Activated naive CD8-positive, alpha-beta T cell treated with anti-CD3 and anti-CD28 coated beads, Interleukin-2, amount 10 ng/mL, durations not matched to agents 7 days and 5 days (primary cell): ENCODE measurements at regions of chr11 and their contacts with region 1.

Region 1: GRCh38 chr11:62726915-62727763 is at the start of gene HNRNPUL2:
- DNase-seq: peak; percentile 99
- ATAC-seq: peak; percentile 89
- H3K4me3 Mint-ChIP-seq: peak within 1 kb of the TSS; percentile 100
- H3K27ac Mint-ChIP-seq: peak within 1 kb of the TSS; percentile 98
- H3K4me1 Mint-ChIP-seq: peaks cover 41% of the 10 kb centered on the region
- H3K27me3 Mint-ChIP-seq: no peaks in the 10 kb centered on the region
- total RNA-seq, gene HNRNPUL2: 67.9 to 72.5 TPM

Region 2: GRCh38 chr11:62479631-62480201 is 247.4 kb before region 1 on chr11:
- POLR2A ChIA-PET with region 1: no interaction called
- DNase-seq: no peak
- ATAC-seq: no peak
- H3K4me3 Mint-ChIP-seq: no peak overlapping the region
- H3K27ac Mint-ChIP-seq: no peak overlapping the region
- H3K4me1 Mint-ChIP-seq: no peaks in the 10 kb centered on the region
- H3K27me3 Mint-ChIP-seq: peaks cover 6% of the 10 kb centered on the region

Region 3: DNA sequence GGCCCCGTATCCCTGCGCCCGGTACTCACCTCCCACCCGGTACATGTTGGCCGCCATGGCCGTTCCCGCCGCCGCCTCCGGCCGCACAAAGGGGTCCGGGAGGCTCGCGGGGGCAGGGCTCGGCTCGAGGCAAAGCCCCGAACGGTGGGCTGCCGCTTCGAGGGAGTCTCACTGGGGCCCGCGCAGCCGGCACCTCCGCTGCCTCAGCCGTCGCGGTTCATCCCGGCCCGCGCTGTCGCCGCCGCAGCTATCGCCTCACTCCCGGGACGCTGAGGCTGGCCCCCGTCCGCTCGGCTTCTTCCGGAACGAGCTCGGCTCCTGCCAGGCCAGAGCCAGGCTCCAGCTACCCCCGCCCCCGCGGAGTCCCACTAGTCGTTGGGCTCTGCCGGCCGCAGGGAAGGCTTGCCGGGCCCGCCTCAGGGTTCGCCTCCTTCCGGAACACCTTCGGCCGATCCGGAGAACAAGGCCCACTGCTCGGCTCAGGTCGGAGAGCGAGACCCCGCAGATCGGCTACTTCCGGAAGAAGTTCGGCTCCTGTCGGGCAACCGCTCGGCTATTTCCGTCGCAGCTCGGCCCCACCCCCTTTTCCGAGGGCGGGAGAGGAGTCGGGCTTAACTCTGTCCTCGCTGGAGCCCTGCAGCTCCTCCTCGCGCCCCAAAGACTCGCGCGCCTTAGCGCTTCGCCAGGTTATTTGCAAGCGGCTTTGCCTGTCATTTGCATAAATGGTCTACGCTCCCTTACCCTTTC is 125.6 kb before region 1 on chr11 and contains the start of gene MTA2:
- POLR2A ChIA-PET with region 1: interaction called, 14 read pairs
- DNase-seq: peak; percentile 99
- ATAC-seq: peak; percentile 89
- H3K4me3 Mint-ChIP-seq: peak within 1 kb of the TSS; percentile 87
- H3K27ac Mint-ChIP-seq: peak within 1 kb of the TSS; percentile 88
- H3K4me1 Mint-ChIP-seq: peaks cover 34% of the 10 kb centered on the region
- H3K27me3 Mint-ChIP-seq: no peaks in the 10 kb centered on the region
- total RNA-seq, gene MTA2: 231 to 233 TPM

Region 4: DNA sequence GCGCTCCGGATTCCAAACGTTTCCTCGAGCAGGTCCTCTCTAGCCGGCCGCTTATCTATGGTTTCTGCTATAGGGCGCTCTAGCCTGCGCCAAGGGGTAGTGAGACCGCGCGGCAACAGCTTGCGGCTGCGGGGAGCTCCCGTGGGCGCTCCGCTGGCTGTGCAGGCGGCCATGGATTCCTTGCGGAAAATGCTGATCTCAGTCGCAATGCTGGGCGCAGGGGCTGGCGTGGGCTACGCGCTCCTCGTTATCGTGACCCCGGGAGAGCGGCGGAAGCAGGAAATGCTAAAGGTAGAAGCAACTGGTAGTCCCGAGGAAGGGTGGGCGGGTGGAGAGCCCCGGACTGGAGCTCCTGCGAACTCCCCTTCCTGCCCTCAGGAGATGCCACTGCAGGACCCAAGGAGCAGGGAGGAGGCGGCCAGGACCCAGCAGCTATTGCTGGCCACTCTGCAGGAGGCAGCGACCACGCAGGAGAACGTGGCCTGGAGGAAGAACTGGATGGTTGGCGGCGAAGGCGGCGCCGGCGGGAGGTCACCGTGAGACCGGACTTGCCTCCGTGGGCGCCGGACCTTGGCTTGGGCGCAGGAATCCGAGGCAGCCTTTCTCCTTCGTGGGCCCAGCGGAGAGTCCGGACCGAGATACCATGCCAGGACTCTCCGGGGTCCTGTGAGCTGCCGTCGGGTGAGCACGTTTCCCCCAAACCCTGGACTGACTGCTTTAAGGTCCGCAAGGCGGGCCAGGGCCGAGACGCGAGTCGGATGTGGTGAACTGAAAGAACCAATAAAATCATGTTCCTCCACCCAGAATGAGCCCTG is 55.4 kb before region 1 on chr11 and contains the starts of genes LBHD1 and UQCC3:
- POLR2A ChIA-PET with region 1: interaction called, 24 read pairs
- DNase-seq: peak; percentile 84
- ATAC-seq: peak; percentile 87
- H3K4me3 Mint-ChIP-seq: peak within 1 kb of the TSS; percentile 94
- H3K27ac Mint-ChIP-seq: peak within 1 kb of the TSS; percentile 91
- H3K4me1 Mint-ChIP-seq: peaks cover 35% of the 10 kb centered on the region
- H3K27me3 Mint-ChIP-seq: no peaks in the 10 kb centered on the region
- total RNA-seq, gene LBHD1: 23.5 to 23.6 TPM
- total RNA-seq, gene UQCC3: 6.7 to 6.8 TPM

Region 5: GRCh38 chr11:62715150-62716135 is 11.7 kb before region 1 on chr11:
- POLR2A ChIA-PET with region 1: interaction called, 107 read pairs
- DNase-seq: peak; percentile 9
- ATAC-seq: no peak
- H3K4me3 Mint-ChIP-seq: no peak overlapping the region
- H3K27ac Mint-ChIP-seq: no peak overlapping the region
- H3K4me1 Mint-ChIP-seq: peaks cover 56% of the 10 kb centered on the region
- H3K27me3 Mint-ChIP-seq: no peaks in the 10 kb centered on the region

Region 6: DNA sequence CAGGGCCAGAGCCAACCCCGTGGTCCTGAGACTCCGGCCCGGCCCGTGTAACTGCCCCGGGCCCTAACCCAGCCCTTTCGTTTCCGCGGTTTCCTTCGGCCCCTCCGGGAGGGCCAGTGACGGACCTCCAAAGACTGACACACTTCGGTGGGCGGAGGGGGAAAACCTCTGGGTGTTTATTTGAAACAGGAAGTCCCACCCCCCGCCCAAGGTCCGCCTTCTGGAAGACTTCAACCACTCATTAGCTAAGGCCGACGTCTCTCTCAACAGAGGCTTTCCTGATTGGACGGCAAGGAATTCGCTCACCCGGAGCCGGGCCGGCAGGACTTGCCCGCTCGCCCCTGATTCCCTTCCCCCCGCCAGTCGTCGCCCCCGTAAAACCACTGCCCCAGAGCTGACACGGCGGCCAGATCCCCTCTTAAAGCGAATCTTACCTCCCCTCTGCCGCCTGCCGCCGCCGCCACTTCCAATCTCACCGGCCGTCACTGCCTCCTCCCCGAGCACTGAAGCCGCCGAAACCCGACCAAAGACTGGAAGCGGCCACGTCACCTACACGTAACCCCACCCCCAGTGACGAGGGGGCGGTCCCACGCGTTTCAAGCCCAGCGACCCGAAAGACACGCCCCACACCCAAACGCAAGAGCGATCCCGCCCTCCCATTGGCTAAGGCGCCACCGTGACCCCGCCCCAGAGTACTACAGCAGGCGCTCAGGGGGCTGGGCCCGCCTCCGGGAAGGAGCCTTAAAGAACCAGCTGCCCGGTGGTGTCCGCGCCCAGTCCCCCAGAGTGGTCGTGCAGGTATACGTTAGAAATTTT is 104.6 kb after region 1 on chr11 and contains the start of gene STX5:
- POLR2A ChIA-PET with region 1: interaction called, 15 read pairs
- DNase-seq: peak; percentile 99
- ATAC-seq: peak; percentile 91
- H3K4me3 Mint-ChIP-seq: peak within 1 kb of the TSS; percentile 99
- H3K27ac Mint-ChIP-seq: peak within 1 kb of the TSS; percentile 100
- H3K4me1 Mint-ChIP-seq: peaks cover 26% of the 10 kb centered on the region
- H3K27me3 Mint-ChIP-seq: no peaks in the 10 kb centered on the region
- total RNA-seq, gene STX5: 43.4 to 44.3 TPM

Region 7: GRCh38 chr11:62905927-62906531 is 178.9 kb after region 1 on chr11:
- POLR2A ChIA-PET with region 1: no interaction called
- DNase-seq: peak; percentile 81
- ATAC-seq: peak; percentile 68
- H3K4me3 Mint-ChIP-seq: no peak overlapping the region
- H3K27ac Mint-ChIP-seq: no peak overlapping the region
- H3K4me1 Mint-ChIP-seq: peaks cover 13% of the 10 kb centered on the region
- H3K27me3 Mint-ChIP-seq: peaks cover 17% of the 10 kb centered on the region